ENCODE measurements at regions of chr18 and their contacts with region 1.

Region 1: GRCh38 chr18:74353169-74353775 is 37.6 kb downstream of the C18orf63 start:
- DNase-seq: no peak
- ATAC-seq: peak; percentile 40
- H3K4me3 Mint-ChIP-seq: no peak overlapping the region
- H3K27ac Mint-ChIP-seq: no peak overlapping the region
- H3K4me1 Mint-ChIP-seq: peaks cover 13% of the 10 kb centered on the region
- H3K27me3 Mint-ChIP-seq: no peaks in the 10 kb centered on the region
- CTCF ChIP-seq: no peak

Region 2: GRCh38 chr18:74551936-74552555 is 198.8 kb after region 1 on chr18:
- CTCF ChIA-PET with region 1: interaction called, 38 read pairs
- POLR2A ChIA-PET with region 1: no interaction called
- intact Hi-C with region 1: loop called (anchors 1 kb)
- DNase-seq: peak; percentile 41
- ATAC-seq: peak; percentile 97
- H3K4me3 Mint-ChIP-seq: no peak overlapping the region
- H3K27ac Mint-ChIP-seq: no peak overlapping the region
- H3K4me1 Mint-ChIP-seq: no peaks in the 10 kb centered on the region
- H3K27me3 Mint-ChIP-seq: peaks cover 14% of the 10 kb centered on the region
- CTCF ChIP-seq: no peak

Region 3: DNA sequence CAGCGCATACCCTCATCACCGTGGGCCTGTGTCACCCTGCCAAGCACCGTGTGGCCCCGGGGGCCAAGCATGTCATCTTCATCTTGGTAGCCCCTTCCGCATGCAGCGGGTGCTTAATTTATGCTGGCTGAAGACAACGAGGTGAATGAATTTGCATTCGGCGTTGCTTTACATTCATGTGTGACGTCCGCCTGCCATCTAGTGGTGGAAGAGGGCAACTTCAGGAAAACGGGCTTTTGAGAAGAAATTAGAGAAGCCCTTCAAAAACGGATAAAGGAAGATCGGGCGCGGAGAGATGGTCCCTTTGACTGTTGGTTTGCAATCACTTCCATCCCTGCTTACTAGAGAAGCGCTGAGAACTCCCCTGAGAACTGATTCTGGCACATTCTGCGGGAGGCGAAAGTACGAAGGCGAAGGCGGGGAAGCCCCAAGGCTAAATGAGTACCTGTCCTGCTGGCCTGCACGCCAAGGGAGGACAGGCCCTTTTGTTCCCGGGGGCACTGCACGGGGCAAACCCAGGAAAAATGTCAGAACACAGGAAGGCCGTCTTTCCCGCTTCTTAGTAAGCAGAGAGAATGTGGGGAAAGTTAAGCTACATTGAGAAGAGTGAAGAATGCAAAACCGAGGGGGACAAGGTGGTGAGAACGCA is 1995.9 kb after region 1 on chr18:
- CTCF ChIA-PET with region 1: no interaction called
- POLR2A ChIA-PET with region 1: no interaction called
- intact Hi-C with region 1: loop called (anchors 2 kb)
- DNase-seq: peak; percentile 38
- ATAC-seq: peak; percentile 28
- H3K4me3 Mint-ChIP-seq: peak overlapping the region; percentile 36
- H3K27ac Mint-ChIP-seq: no peak overlapping the region
- H3K4me1 Mint-ChIP-seq: peaks cover 7% of the 10 kb centered on the region
- H3K27me3 Mint-ChIP-seq: peaks cover 3% of the 10 kb centered on the region
- CTCF ChIP-seq: no peak